ENCODE measurements at regions of chr3 and their contacts with region 1.

Region 1: DNA sequence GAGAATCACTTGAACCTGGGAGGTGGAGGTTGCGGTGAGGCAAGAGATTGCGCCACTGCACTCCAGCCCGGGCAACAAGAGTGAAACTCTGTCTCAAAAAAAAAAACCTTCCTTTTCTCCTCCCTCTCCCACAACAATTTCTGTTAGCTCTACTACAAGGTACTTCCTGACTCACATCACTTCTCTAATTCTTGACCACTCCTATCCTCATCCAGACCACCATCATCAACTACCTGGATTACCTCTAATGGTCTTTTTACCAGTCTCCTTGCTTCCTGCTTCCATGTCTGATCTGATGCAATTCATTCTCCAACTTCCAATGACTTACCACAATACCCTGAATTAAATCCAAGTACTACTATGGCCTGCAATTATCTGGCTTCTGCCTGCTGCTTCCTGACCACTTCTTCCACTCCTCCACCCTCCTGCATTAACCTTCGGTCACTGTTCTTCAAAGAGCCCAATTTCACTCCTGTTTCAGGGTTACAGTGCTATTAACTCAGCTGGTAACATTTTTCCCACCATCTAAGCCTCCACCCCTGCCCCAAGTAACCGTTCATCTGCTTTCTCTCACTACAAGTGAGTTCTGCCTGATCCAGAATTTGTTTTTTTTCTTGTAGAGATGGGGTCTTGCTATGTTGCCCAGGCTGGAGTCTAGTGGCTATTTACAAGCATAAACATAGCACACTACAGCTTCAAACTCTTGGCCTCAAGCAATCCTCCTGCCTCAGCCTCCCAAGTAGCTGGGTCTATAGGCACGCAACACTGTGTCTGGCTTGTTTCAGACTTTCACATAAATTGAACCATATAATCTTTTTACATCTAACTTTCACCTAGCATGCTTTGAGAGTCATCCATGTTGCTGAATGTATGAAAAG is 27.8 kb downstream of the DCAF1 start:
- DNase-seq: peak; percentile 8
- H3K4me3 ChIP-seq: no peak overlapping the region
- CTCF ChIP-seq: no peak

Region 2: GRCh38 chr3:51408813-51409212 is 63.2 kb before region 1 on chr3:
- in situ Hi-C with region 1: loop called (anchors 5 kb)
- DNase-seq: no peak
- H3K4me3 ChIP-seq: no peak overlapping the region
- CTCF ChIP-seq: no peak

Measured in astrocyte of the cerebellum (primary cell).